MCF 10A (cell line): ENCODE measurements at regions of chr22 and their contacts with region 1.

Region 1: DNA sequence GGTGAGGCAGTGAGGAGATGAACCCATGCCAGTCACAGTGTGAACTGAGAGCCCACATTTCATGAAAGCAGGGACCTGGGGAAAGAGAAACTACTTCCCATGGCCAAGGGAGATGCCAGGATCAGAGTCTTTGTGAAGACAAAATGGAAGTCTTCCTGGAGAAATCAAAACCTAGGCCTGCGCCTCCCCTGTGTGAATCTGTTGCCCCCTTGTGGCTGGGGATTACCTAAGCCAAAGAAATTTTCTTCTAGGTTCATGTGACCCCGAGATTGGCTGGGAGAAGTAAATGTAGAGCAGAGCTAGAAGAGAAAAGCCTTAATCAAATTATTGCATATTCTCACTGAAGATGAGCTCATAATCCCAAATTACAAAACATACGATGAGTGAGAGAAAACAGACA is 1075.3 kb downstream of the TBC1D22A start:
- DNase-seq: peak; percentile 8
- H3K4me3 Mint-ChIP-seq: no peak overlapping the region
- H3K27ac Mint-ChIP-seq: peak overlapping the region; percentile 93
- H3K4me1 Mint-ChIP-seq: peaks cover 63% of the 10 kb centered on the region
- H3K27me3 Mint-ChIP-seq: peaks cover 14% of the 10 kb centered on the region
- CTCF ChIP-seq: peak; percentile 49

Region 2: GRCh38 chr22:46829941-46830715 is 1007.6 kb before region 1 on chr22:
- CTCF ChIA-PET with region 1: no interaction called
- POLR2A ChIA-PET with region 1: no interaction called
- intact Hi-C with region 1: loop called (anchors 5 kb)
- DNase-seq: peak; percentile 55
- H3K4me3 Mint-ChIP-seq: peak overlapping the region; percentile 59
- H3K27ac Mint-ChIP-seq: peak overlapping the region; percentile 95
- H3K4me1 Mint-ChIP-seq: peaks cover 41% of the 10 kb centered on the region
- H3K27me3 Mint-ChIP-seq: no peaks in the 10 kb centered on the region
- CTCF ChIP-seq: no peak

Region 3: DNA sequence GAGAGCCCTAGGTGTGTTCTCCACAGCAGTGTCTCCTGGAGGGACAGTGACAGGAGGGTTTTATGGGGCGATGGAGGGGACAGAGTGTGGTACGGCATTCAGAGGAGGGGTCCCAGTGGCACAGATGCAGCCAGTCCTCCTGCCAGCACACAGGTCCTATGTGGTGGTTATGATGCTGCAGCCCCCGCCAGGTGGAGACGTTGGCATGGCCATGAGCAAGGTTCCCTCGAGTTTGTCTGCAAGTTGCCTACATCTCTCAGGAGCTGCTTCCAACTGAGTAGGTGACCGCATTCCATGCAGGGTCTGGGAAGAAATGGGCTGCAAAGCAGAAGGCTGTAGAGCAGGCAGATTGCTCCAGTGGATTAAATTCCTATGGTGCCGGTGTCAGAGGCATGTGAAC is 429.3 kb before region 1 on chr22:
- CTCF ChIA-PET with region 1: no interaction called
- POLR2A ChIA-PET with region 1: no interaction called
- intact Hi-C with region 1: loop called (anchors 2 kb)
- DNase-seq: peak; percentile 2
- H3K4me3 Mint-ChIP-seq: no peak overlapping the region
- H3K27ac Mint-ChIP-seq: no peak overlapping the region
- H3K4me1 Mint-ChIP-seq: peaks cover 4% of the 10 kb centered on the region
- H3K27me3 Mint-ChIP-seq: peaks cover 38% of the 10 kb centered on the region
- CTCF ChIP-seq: peak; percentile 37

Region 4: DNA sequence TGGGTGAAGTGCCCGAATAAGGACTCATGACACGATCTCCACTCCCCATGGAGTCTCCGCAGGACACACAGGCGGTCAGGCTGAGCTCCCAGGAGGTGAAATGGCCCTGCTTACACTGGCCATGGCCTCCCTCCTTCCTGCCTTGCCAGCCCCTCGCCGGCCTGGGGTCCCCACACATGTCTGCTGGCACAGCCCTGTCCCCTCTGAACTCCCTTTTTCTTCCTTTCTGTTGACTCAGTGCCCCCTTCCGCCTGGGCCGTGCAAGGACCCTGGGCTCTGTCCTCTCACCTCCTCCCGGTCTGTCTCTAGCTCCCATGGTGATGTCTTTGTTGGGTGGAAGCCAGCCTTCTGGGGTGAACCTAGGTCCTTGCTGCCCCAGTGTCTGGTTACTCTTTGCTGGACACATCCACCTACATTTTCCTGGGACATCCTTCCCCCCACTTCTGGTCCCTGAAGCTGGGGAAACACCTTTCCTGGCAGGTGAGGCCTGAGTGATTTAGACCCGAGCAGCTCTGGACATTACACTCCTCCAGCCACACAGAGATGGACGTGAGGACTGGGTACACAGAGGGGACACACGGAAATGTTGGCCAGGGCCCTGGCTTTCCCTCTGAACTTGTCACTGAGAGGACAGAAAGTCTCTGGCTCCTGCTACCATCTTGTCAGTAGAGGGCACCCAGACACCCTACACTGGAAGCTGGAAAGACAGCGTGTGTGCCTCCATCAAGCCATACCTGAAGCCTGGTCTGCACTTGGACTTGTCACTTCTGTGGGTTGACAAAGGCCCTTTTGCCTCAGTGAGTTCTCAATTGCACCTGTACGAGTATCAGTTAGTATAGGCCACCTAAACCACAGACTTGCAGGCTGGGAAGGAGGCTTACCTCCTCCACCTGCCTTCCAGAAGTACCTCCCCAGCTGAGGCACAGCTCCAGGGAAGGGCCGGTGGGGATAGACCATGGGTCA is 211.0 kb before region 1 on chr22:
- CTCF ChIA-PET with region 1: no interaction called
- POLR2A ChIA-PET with region 1: no interaction called
- intact Hi-C with region 1: loop called (anchors 1 kb)
- DNase-seq: no peak
- H3K4me3 Mint-ChIP-seq: no peak overlapping the region
- H3K27ac Mint-ChIP-seq: no peak overlapping the region
- H3K4me1 Mint-ChIP-seq: no peaks in the 10 kb centered on the region
- H3K27me3 Mint-ChIP-seq: peaks cover 22% of the 10 kb centered on the region
- CTCF ChIP-seq: peak; percentile 38